ENCODE measurements at regions of chr22 and their contacts with region 1.

Region 1: DNA sequence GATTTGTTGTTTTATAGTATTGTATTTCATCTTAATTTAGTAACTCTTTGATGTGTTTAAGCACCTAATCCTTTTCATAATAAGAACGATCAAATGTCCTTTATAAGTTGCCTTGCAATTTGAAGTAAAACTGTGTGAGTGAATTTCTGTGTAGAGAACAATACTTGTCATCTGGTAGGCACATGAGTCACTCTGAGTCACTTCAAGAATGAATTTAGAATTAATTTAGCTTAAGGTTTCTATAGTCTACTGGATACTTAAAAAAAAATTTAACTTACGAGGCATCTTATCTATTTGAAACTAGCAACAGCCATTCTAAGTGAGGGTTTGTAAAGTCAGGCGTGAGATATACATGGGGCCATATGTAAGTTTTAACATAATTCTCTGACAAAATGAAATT is 85.0 kb downstream of the C22orf31 start:
- DNase-seq: no peak
- H3K4me3 Mint-ChIP-seq: peak overlapping the region; percentile 9
- H3K27ac Mint-ChIP-seq: peak overlapping the region; percentile 61
- H3K4me1 Mint-ChIP-seq: peaks cover 45% of the 10 kb centered on the region
- H3K27me3 Mint-ChIP-seq: no peaks in the 10 kb centered on the region
- CTCF ChIP-seq: no peak

Region 2: GRCh38 chr22:29022101-29022817 is 45.7 kb after region 1 on chr22:
- CTCF ChIA-PET with region 1: no interaction called
- intact Hi-C with region 1: loop called (anchors 2 kb)
- DNase-seq: no peak
- H3K4me3 Mint-ChIP-seq: peak overlapping the region; percentile 50
- H3K27ac Mint-ChIP-seq: peak overlapping the region; percentile 72
- H3K4me1 Mint-ChIP-seq: peaks cover 46% of the 10 kb centered on the region
- H3K27me3 Mint-ChIP-seq: no peaks in the 10 kb centered on the region
- CTCF ChIP-seq: no peak

Region 3: DNA sequence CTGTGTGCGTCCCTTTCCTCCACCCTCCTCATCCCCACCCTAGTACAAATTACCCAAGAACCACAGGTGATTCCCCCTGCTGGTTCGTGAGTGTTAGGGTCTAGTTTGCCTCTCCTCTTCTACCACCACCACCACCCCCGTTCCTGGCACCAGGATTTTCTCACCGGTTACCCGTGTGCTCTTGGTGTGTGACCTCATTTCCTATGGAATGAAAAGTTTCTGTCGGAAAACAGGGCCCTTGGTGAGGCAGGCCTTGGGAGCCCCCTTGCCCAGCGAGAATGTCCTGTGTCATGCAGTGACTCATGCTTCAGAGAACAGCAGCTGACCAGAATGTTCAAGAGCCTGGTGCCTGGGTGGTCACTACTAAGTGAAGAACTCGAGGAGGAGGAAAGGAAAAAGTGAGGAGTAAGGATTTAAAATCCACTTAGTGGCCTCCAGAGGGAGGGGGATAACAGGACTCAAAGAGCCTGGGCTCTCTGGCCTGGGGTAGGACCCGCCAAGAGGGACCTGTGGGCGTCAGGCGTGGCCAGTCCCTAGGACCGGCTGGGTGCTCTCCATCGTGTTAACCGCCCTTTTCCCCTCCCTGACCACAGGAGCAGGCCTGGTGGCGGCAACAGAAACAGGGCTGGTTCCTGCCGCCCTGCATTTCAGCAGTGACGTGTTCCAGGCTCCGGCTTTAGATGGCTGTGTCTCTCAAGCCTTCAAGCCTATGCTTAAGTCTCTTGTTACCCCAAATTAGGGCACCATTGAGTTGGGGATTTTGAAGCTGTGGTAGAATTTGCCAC is 54.8 kb after region 1 on chr22:
- CTCF ChIA-PET with region 1: interaction called, 3 read pairs
- intact Hi-C with region 1: loop called (anchors 2 kb)
- DNase-seq: peak; percentile 84
- H3K4me3 Mint-ChIP-seq: peak overlapping the region; percentile 92
- H3K27ac Mint-ChIP-seq: peak overlapping the region; percentile 99
- H3K4me1 Mint-ChIP-seq: peaks cover 60% of the 10 kb centered on the region
- H3K27me3 Mint-ChIP-seq: no peaks in the 10 kb centered on the region
- CTCF ChIP-seq: peak; percentile 18

Measured in Calu3 (cell line).